ENCODE measurements at regions of chr17 and their contacts with region 1.

Region 1: GRCh38 chr17:40287494-40288369 is at the start of gene CDC6:
- DNase-seq: peak; percentile 99
- ATAC-seq: peak; percentile 95
- H3K4me3 ChIP-seq: peak within 1 kb of the TSS; percentile 27 to 85 (median 69)
- H3K4me3 Mint-ChIP-seq: peak within 1 kb of the TSS; percentile 97
- H3K27ac ChIP-seq: peak within 1 kb of the TSS in 1 of 2 donors; percentile 42
- H3K27ac Mint-ChIP-seq: peak within 1 kb of the TSS; percentile 70
- H3K4me1 ChIP-seq: peaks cover 9 to 11% of the 10 kb centered on the region in 2 donors
- H3K4me1 Mint-ChIP-seq: peaks cover 15% of the 10 kb centered on the region
- H3K27me3 ChIP-seq: no peaks in the 10 kb centered on the region
- H3K27me3 Mint-ChIP-seq: no peaks in the 10 kb centered on the region
- CTCF ChIP-seq: no peak
- total RNA-seq, gene CDC6: 0.63 and 2.2 TPM in 2 replicates

Region 2: GRCh38 chr17:40018211-40019121 is 269.3 kb before region 1 on chr17:
- CTCF ChIA-PET with region 1: interaction called, 4 read pairs
- POLR2A ChIA-PET with region 1: no interaction called
- intact Hi-C with region 1: loop called (anchors 1 kb)
- DNase-seq: no peak
- ATAC-seq: no peak
- H3K4me3 ChIP-seq: no peak overlapping the region
- H3K4me3 Mint-ChIP-seq: no peak overlapping the region
- H3K27ac ChIP-seq: no peak overlapping the region
- H3K27ac Mint-ChIP-seq: no peak overlapping the region
- H3K4me1 ChIP-seq: peaks cover 0 to 3% of the 10 kb centered on the region in 2 donors
- H3K4me1 Mint-ChIP-seq: no peaks in the 10 kb centered on the region
- H3K27me3 ChIP-seq: no peaks in the 10 kb centered on the region
- H3K27me3 Mint-ChIP-seq: no peaks in the 10 kb centered on the region
- CTCF ChIP-seq: no peak

Region 3: GRCh38 chr17:40203131-40203530 is 84.6 kb before region 1 on chr17:
- CTCF ChIA-PET with region 1: interaction called, 24 read pairs
- POLR2A ChIA-PET with region 1: no interaction called
- intact Hi-C with region 1: loop called (anchors 1 kb)
- DNase-seq: no peak
- ATAC-seq: no peak
- H3K4me3 ChIP-seq: no peak overlapping the region
- H3K4me3 Mint-ChIP-seq: no peak overlapping the region
- H3K27ac ChIP-seq: no peak overlapping the region
- H3K27ac Mint-ChIP-seq: no peak overlapping the region
- H3K4me1 ChIP-seq: no peaks in the 10 kb centered on the region
- H3K4me1 Mint-ChIP-seq: no peaks in the 10 kb centered on the region
- H3K27me3 ChIP-seq: peaks cover 0 to 4% (median 0%) of the 10 kb centered on the region in 4 experiments
- H3K27me3 Mint-ChIP-seq: peaks cover 9% of the 10 kb centered on the region
- CTCF ChIP-seq: no peak

Region 4: DNA sequence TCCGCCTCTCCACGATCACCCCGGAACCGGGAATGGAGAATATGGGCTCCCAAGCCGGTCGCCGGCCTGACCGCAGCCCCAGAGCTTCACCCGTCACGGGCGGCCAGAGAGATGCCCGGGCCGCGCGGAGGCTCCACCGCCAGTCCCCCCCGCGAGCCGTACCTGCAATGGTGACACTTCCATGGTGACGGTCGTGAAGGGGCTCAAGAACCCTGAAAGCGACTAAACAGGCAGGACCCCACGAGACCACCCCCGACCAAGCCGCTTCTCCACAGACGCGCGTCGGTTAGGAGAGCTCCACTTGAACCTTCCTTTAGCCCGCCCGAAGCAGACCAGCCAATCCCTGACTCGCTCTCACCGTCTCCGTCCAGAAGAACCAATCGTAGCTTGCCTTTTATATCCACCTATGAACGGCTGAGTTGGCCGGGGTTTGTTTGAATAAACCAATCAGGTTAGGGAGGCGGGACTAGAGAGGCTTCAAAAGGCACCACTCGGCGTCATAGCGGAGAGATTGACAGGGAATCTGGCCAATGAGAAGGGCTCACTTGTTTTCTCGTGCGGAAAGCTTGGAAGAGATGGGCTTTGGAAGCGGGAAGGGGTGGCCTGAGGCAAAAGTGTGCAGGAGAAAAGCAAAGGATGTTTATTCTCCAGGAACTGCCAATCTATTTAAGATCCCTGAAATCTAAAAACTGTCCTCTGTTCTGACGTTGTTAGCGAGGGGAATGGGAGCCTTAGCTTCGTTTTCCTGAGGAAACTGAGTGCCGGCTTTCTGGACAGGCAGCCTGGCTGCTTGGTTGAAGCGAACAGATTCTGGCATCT is 130.1 kb after region 1 on chr17 and contains the start of gene TOP2A:
- CTCF ChIA-PET with region 1: no interaction called
- POLR2A ChIA-PET with region 1: no interaction called
- intact Hi-C with region 1: loop called (anchors 5 kb)
- DNase-seq: peak; percentile 99
- ATAC-seq: peak; percentile 99
- H3K4me3 ChIP-seq: peak within 1 kb of the TSS; percentile 63 to 93 (median 84)
- H3K4me3 Mint-ChIP-seq: peak within 1 kb of the TSS; percentile 89
- H3K27ac ChIP-seq: peak within 1 kb of the TSS; percentile 63 to 72
- H3K27ac Mint-ChIP-seq: peak within 1 kb of the TSS; percentile 86
- H3K4me1 ChIP-seq: peaks cover 7 to 17% of the 10 kb centered on the region in 2 donors
- H3K4me1 Mint-ChIP-seq: peaks cover 15% of the 10 kb centered on the region
- H3K27me3 ChIP-seq: no peaks in the 10 kb centered on the region
- H3K27me3 Mint-ChIP-seq: no peaks in the 10 kb centered on the region
- CTCF ChIP-seq: no peak
- total RNA-seq, gene TOP2A: 3.0 and 3.1 TPM in 2 replicates